Naive thymus-derived CD4-positive, alpha-beta T cell (primary cell): ENCODE measurements at regions of chr16 and their contacts with region 1.

Region 1: DNA sequence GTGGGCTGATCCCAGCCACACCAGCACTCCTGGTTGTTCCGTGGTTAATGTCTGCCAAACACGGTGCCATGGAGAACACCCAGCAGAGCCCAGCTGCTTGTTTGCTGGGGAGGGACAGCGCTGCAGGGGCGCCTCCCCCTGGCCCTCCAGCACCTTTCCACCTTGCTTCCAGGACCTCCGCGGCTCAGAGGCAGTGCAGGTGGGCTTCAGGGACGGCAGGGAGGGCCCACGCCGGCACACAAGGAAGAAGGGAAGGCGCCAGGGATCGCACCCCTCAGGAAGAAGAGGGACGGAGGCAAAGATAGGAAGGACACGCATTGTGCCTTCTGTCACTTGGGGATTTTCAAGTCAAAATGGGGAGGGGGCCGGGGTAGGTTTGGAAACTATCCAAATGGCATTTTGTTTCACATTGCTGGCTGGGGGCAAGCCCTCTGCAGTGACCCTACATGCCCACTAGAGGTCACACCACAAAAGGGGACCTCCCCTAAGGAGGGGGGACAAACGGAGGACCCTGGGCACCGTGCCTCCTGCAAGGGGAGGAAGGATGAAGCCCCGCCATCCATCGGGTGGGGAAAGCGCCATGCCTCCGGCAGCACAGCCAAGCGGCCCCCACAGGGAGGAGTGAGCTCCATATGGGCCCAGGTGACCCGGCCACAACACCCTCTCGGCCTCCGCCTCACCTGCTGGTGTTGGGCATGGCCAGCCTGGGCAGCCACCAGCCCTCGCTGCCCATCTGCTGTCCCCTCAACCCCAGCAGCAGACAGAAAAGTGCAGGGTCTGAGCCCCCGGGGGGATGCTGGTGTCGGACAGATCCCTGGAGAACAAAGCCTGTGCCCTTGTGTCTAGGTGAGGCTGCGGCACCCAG is 7.5 kb upstream of the C16orf95 start:
- DNase-seq: peak in 7 of 9 donors; percentile 30 to 49 (median 41)
- ATAC-seq: peak; percentile 88
- H3K4me3 ChIP-seq: no peak overlapping the region
- H3K4me3 Mint-ChIP-seq: no peak overlapping the region
- H3K27ac ChIP-seq: peak overlapping the region; percentile 20
- H3K27ac Mint-ChIP-seq: peak overlapping the region in 3 of 9 donors; percentile 32 to 59 (median 39)
- H3K4me1 ChIP-seq: peaks cover 0 to 4% of the 10 kb centered on the region in 2 donors
- H3K4me1 Mint-ChIP-seq: peaks cover 0 to 5% (median 4%) of the 10 kb centered on the region in 7 donors
- H3K27me3 ChIP-seq: no peaks in the 10 kb centered on the region
- H3K27me3 Mint-ChIP-seq: no peaks in the 10 kb centered on the region

Region 2: DNA sequence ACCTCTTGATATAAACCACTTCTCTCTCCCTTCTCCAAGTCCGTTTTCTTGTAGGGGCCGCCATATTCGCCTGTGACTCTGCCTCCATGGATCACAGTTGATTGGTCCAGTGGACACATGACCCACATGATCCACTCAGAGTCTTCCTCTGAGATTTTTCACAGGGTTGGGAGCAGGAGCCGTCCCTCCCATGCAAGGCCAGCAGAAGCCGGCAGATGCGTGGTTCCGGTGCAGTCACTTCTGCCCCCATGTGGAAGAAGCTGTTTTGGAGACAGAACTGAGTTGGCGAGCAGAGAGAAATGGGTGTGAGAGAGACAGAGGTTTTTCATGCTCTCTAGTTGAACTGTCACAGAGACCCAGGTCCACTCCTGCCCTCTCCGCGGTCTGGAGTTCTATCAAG is 90.7 kb before region 1 on chr16:
- CTCF ChIA-PET with region 1: no interaction called
- POLR2A ChIA-PET with region 1: no interaction called
- intact Hi-C with region 1: no loop called
- DNase-seq: no peak
- ATAC-seq: no peak
- H3K4me3 ChIP-seq: no peak overlapping the region
- H3K4me3 Mint-ChIP-seq: no peak overlapping the region
- H3K27ac ChIP-seq: no peak overlapping the region
- H3K27ac Mint-ChIP-seq: no peak overlapping the region
- H3K4me1 ChIP-seq: peaks cover 0 to 3% of the 10 kb centered on the region in 2 donors
- H3K4me1 Mint-ChIP-seq: peaks cover 0 to 20% (median 11%) of the 10 kb centered on the region in 7 donors
- H3K27me3 ChIP-seq: no peaks in the 10 kb centered on the region
- H3K27me3 Mint-ChIP-seq: peaks cover 9 to 26% (median 21%) of the 10 kb centered on the region in 5 donors

Region 3: DNA sequence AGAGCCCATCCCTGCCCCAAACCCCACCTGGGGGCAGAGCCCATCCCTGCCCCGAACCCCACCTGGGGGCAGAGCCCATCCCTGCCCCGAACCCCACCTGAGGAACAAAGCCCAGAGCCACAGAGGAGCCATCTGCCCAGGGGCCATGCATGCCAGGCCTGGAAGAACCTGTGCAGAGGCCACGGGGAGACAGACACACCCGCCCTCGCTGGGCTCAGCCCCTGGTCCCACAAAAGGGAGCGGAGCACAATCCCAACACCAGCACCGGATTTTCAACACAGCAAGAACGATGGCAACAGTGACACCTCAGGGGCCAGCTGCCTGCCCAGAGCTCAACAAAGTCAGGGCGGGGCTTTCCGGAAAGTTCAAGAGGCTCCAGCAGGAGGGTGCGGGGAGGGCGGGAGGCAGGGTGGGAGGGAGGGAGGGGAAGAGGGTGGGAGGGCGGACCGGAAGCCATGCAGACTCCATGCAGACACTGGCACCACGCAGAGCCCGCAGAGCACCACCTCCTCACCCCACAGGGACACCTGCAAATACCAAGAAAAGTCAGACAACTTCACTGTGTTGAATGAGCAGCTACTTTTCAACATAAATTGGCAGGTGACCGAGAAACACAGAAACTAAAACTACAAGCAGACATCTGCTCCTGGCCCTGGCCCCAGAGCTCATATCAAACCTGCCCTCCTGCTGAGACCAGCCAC is 20.4 kb after region 1 on chr16:
- CTCF ChIA-PET with region 1: interaction called, 3 read pairs
- POLR2A ChIA-PET with region 1: no interaction called
- intact Hi-C with region 1: loop called in 1 of 2 experiments (anchors 1 kb)
- DNase-seq: peak in 7 of 9 donors; percentile 36 to 61 (median 41)
- ATAC-seq: peak; percentile 68
- H3K4me3 ChIP-seq: no peak overlapping the region
- H3K4me3 Mint-ChIP-seq: peak overlapping the region in 9 of 10 donors; percentile 43 to 84 (median 81)
- H3K27ac ChIP-seq: peak overlapping the region; percentile 55
- H3K27ac Mint-ChIP-seq: peak overlapping the region; percentile 74 to 99 (median 93)
- H3K4me1 ChIP-seq: peaks cover 5 to 8% of the 10 kb centered on the region in 2 donors
- H3K4me1 Mint-ChIP-seq: peaks cover 4 to 34% (median 16%) of the 10 kb centered on the region in 7 donors
- H3K27me3 ChIP-seq: no peaks in the 10 kb centered on the region
- H3K27me3 Mint-ChIP-seq: no peaks in the 10 kb centered on the region

Region 4: DNA sequence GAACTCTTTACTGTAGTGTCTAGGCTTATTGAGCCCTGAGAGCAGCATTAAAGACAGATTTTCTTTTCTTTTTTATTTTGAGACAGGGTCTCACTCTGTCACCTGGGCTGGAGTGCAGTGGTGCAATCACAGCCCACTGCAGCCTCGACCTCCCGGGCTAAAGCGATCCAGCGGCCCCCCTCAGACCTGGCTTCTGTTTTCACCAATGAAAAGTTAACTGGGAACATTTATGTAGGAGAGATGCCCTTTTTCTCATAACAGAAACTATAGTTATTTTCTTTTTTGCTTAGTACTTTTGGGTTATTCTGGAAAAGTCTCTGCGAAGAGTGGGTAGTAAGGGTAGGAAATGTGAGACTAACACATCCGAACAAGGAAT is 69.0 kb after region 1 on chr16:
- CTCF ChIA-PET with region 1: interaction called, 6 read pairs
- POLR2A ChIA-PET with region 1: no interaction called
- intact Hi-C with region 1: loop called in 1 of 2 experiments (anchors 1 kb)
- DNase-seq: no peak
- ATAC-seq: no peak
- H3K4me3 ChIP-seq: peak overlapping the region; percentile 84
- H3K4me3 Mint-ChIP-seq: peak overlapping the region; percentile 90 to 96 (median 93)
- H3K27ac ChIP-seq: peak overlapping the region; percentile 89
- H3K27ac Mint-ChIP-seq: peak overlapping the region; percentile 78 to 97 (median 94)
- H3K4me1 ChIP-seq: peaks cover 17 to 22% of the 10 kb centered on the region in 2 donors
- H3K4me1 Mint-ChIP-seq: peaks cover 25 to 55% (median 47%) of the 10 kb centered on the region in 7 donors
- H3K27me3 ChIP-seq: no peaks in the 10 kb centered on the region
- H3K27me3 Mint-ChIP-seq: no peaks in the 10 kb centered on the region